Activated CD8-positive, alpha-beta T cell treated with anti-CD3 and anti-CD28 coated beads for 36 hours (primary cell): ENCODE measurements at regions of chr1 and their contacts with region 1.

Region 1: GRCh38 chr1:101474039-101474665 is 237.3 kb downstream of the S1PR1 start:
- DNase-seq: no peak
- ATAC-seq: no peak
- H3K4me3 Mint-ChIP-seq: no peak overlapping the region
- H3K27ac Mint-ChIP-seq: no peak overlapping the region
- H3K4me1 Mint-ChIP-seq: peaks cover 7% of the 10 kb centered on the region
- H3K27me3 Mint-ChIP-seq: no peaks in the 10 kb centered on the region
- CTCF ChIP-seq: peak; percentile 63

Region 2: GRCh38 chr1:101484689-101485338 is 10.7 kb after region 1 on chr1:
- CTCF ChIA-PET with region 1: interaction called, 11 read pairs
- POLR2A ChIA-PET with region 1: no interaction called
- intact Hi-C with region 1: no loop called
- DNase-seq: no peak
- ATAC-seq: no peak
- H3K4me3 Mint-ChIP-seq: no peak overlapping the region
- H3K27ac Mint-ChIP-seq: no peak overlapping the region
- H3K4me1 Mint-ChIP-seq: no peaks in the 10 kb centered on the region
- H3K27me3 Mint-ChIP-seq: no peaks in the 10 kb centered on the region
- CTCF ChIP-seq: no peak